GM10248 (cell line): ENCODE measurements at regions of chr11 and their contacts with region 1.

Region 1: GRCh38 chr11:68213555-68214174 is 569 bp upstream of the KMT5B start:
- DNase-seq: peak; percentile 87
- CTCF ChIP-seq: no peak

Region 2: DNA sequence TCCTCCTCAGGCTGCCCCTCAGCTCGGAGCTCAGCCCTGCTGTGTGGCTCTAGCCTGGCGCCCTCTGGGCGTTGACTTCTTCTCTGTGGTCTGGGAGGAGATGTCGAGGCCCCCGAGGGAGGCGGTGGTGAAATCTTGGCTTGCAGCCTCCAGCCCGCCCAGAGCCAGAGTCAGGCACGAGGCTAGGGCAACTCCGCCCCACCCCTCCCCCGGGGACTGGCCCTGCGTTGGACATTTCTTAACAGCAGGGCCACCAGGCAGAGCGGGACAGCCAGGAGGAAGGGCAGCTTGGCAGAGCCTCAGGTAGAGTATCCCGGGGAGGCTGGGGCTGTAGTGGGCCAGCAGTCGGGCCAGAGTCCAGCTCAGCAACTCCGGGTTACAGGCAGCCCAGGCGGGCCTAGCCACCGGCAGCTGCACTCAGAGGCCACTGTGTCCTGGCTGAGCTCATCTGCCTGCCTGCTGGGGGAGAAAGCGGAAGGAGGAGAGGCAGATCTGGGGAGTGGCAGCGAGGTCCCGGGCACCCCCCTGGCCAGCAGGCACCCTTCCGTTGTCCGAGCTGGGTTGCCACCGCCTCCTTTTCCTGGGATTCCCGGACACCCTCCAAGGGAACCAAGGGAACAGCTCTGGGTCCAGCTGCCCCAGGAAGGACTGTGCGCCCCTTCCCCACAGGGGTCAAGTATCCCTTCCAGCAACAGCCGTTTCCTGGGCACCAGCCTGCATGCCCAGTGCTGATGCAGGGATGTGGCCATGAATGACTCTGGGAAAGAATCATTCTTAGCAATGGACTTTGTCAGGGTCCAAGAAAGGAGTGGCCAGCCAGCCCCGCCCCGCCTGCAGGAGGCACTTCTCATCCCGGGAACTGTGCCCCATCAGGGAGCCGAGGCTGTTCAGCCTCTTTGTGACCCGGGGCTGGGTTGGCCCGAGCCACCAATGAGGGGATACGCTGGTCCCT is 203.3 kb before region 1 on chr11 and contains the start of gene ALDH3B1:
- CTCF ChIA-PET with region 1: interaction called, 21 read pairs
- POLR2A ChIA-PET with region 1: no interaction called
- DNase-seq: no peak
- CTCF ChIP-seq: no peak

Region 3: DNA sequence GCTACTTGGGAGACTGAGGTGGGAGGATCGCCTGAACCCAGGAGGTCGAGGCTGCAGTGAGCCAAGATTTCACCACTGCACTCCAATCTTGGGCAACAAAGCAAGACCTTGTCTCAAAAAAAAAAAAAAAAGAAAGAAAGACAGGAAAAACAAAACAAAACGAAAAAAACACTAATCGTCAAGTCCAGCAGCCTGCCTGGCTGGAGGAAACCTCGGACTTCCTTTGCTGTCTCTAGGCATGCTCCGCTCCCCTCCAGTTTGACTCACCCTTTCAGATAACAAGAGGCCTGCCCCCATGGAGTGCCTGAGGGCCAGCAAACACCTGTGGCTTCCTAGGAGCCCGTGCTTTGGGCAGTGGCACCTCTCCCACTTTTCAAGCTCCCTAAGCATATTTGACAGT is 63.6 kb before region 1 on chr11:
- CTCF ChIA-PET with region 1: no interaction called
- POLR2A ChIA-PET with region 1: no interaction called
- DNase-seq: no peak
- CTCF ChIP-seq: no peak

Region 4: DNA sequence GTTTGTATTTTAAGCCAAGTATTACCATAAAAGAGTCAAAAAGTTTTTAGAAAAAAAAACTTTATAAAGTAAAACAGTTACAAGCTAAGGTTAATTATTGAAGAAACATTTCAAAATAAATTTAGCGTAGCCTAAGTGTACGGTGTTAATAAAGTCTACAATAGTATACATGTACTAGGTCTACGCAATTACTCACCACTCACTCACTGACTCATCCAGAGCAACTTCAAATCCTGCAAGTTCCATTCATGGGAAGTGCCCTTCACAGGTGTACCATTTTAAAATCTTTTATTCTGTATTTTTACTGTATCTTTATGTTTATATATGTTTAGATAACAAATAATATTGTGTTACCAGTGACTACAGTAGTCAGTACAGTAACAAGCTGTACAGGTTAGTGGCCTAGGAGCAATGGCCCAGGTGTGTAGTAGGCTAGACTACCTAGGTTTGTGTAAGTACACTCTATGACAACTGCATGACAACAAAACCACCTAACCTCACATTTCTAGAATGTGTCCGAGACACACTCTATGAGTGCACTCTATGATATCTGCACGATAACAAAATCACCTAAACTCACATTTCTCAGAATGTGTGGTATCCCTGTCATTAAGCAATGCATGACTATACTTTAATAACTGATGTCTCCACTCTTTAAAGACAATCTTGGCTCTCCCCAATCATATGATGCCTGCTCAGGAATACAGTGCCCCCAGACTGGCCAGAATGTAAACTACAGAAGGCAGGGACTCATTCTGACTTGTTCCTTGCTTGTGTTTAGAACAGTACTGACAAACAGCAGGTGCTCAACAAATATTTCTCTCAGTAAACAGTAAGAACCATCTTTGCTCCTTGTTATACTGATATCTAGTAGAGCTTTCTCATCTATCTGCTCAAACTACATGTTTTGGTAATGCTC is 21.7 kb before region 1 on chr11:
- CTCF ChIA-PET with region 1: interaction called, 89 read pairs
- POLR2A ChIA-PET with region 1: no interaction called
- DNase-seq: no peak
- CTCF ChIP-seq: no peak

Region 5: DNA sequence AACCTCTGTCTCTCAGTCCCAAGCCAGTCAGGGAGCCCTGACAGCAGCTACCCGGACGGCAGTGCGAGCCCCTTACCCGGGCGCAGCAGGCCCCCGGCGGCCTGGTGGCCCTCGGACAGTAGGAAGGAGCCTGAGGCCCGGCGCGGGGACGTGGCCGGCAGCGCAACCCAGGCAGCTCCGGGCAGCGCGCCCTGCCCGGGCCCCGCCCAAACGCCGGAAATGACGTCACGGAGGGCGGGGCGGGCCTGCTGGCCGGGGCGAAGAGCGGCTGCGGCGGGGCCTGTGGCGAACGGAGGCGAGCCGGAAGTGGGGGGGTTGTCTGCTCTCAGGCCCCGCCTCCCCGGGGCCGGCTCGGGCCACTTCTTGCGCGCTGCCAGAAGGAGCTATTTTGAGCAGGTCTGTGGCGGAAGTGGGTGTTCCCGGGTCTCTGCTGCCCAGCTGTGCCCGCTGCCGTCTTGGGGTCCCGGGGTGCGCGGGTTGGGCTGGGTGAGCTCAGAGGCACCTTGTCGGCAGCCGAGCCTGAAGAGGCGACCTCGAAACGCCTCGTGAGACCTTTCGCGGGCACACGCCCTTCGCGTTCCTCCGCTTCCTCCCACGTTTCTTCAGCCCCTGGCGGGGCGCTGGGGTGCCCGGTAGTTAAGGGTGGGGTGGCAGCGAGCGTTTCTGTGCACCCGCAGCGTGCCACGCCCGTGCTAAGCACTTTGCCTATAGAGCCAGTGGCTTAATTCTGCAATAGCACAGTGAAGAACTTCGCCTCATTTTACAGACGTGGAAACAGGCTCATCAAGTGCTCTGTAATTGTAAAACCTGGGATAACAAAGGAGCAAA is 58.3 kb after region 1 on chr11 and contains the start of gene C11orf24:
- CTCF ChIA-PET with region 1: interaction called, 11 read pairs
- POLR2A ChIA-PET with region 1: interaction called, 5 read pairs
- DNase-seq: peak; percentile 98
- CTCF ChIP-seq: no peak